ENCODE measurements at regions of chr2 and their contacts with region 1.

Region 1: GRCh38 chr2:205885492-205886099 is 200.4 kb downstream of the INO80D start:
- DNase-seq: peak; percentile 83 to 94
- H3K4me3 ChIP-seq: no peak overlapping the region
- H3K4me1 ChIP-seq: peaks cover 9% of the 10 kb centered on the region
- H3K27me3 ChIP-seq: 0 out of 2 replicates have a peak, but pooled peaks cover 2% of the 10 kb centered on the region

Region 2: GRCh38 chr2:205776139-205776538 is 109.5 kb before region 1 on chr2:
- in situ Hi-C with region 1: loop called (anchors 10 kb)
- DNase-seq: peak; percentile 20 to 84
- H3K4me3 ChIP-seq: no peak overlapping the region
- H3K4me1 ChIP-seq: no peaks in the 10 kb centered on the region
- H3K27me3 ChIP-seq: peaks cover 46% of the 10 kb centered on the region